Endothelial cell of umbilical vein (primary cell): ENCODE measurements at regions of chr19 and their contacts with region 1.

Region 1: GRCh38 chr19:43784981-43785808 is 4.4 kb upstream of the KCNN4 start:
- DNase-seq: peak; percentile 73
- H3K4me3 ChIP-seq: no peak overlapping the region
- H3K27ac ChIP-seq: no peak overlapping the region
- H3K4me1 ChIP-seq: peaks cover 10% of the 10 kb centered on the region
- H3K27me3 ChIP-seq: no peaks in the 10 kb centered on the region
- CTCF ChIP-seq: peak; percentile 97 to 98
- POLR2A ChIP-seq: no peak

Region 2: GRCh38 chr19:43747557-43748204 is 37.5 kb before region 1 on chr19:
- CTCF ChIA-PET with region 1: interaction called, 113 read pairs
- POLR2A ChIA-PET with region 1: no interaction called
- dilution Hi-C with region 1: no loop called
- intact Hi-C with region 1: loop called (anchors 1 kb)
- DNase-seq: no peak
- H3K4me3 ChIP-seq: no peak overlapping the region
- H3K27ac ChIP-seq: no peak overlapping the region
- H3K4me1 ChIP-seq: peaks cover 5% of the 10 kb centered on the region
- H3K27me3 ChIP-seq: no peaks in the 10 kb centered on the region
- CTCF ChIP-seq: no peak
- POLR2A ChIP-seq: no peak

Region 3: GRCh38 chr19:43754503-43755255 is 30.5 kb before region 1 on chr19 and contains the start of gene SMG9:
- CTCF ChIA-PET with region 1: interaction called, 25 read pairs
- POLR2A ChIA-PET with region 1: no interaction called
- dilution Hi-C with region 1: no loop called
- intact Hi-C with region 1: no loop called
- DNase-seq: peak; percentile 99
- H3K4me3 ChIP-seq: peak within 1 kb of the TSS; percentile 67 to 92 (median 74)
- H3K27ac ChIP-seq: peak within 1 kb of the TSS; percentile 97
- H3K4me1 ChIP-seq: peaks cover 34% of the 10 kb centered on the region
- H3K27me3 ChIP-seq: no peaks in the 10 kb centered on the region
- CTCF ChIP-seq: no peak
- POLR2A ChIP-seq: peak; percentile 50
- total RNA-seq, gene SMG9: 45.0 and 53.3 TPM in 2 replicates

Region 4: GRCh38 chr19:43765109-43765876 is 19.9 kb before region 1 on chr19:
- CTCF ChIA-PET with region 1: interaction called, 114 read pairs
- POLR2A ChIA-PET with region 1: no interaction called
- dilution Hi-C with region 1: no loop called
- intact Hi-C with region 1: loop called (anchors 1 kb)
- DNase-seq: peak; percentile 68
- H3K4me3 ChIP-seq: no peak overlapping the region
- H3K27ac ChIP-seq: peak overlapping the region; percentile 61
- H3K4me1 ChIP-seq: peaks cover 17% of the 10 kb centered on the region
- H3K27me3 ChIP-seq: no peaks in the 10 kb centered on the region
- CTCF ChIP-seq: no peak
- POLR2A ChIP-seq: no peak

Region 5: DNA sequence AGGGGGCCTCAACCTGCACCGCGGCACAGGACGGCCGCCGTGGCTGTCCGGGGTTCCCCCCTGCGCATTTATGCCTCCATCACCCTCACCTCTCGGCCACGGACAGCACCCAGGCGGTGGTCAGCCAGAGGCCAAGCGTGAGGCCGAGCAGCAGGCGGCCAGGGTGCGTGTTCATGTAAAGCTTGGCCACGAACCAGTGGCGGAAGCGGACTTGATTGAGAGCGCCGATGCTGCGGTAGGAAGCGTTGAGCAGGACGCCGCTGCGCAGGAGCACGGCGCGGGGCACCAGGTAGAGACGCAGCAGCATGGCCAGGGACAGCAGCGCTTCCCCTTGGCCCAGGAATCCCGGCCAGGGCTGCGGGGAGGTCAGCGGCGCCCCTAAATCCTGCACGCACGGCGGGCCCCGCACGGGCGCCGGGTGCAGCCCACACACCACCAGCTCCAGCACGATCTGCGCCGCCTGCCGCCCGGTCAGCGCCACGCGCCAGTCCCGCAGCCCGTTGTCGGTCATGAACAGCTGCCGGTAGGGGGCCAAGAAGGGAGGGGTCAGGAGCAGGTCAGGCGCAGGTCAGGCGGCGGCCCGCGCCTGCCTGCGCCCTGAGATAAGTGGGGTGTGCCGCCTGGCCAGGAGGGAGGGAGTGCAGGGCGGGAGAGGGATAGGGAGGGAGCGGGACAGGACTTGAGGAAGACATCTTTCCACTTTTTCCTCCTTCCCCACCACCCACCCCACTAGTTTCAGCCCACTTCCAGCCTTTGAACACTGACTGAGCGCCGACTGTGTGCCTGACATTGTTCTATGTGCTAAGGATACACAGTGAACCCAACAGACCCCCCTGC is 10.9 kb before region 1 on chr19:
- CTCF ChIA-PET with region 1: interaction called, 37 read pairs
- POLR2A ChIA-PET with region 1: no interaction called
- dilution Hi-C with region 1: no loop called
- intact Hi-C with region 1: no loop called
- DNase-seq: peak; percentile 70
- H3K4me3 ChIP-seq: no peak overlapping the region
- H3K27ac ChIP-seq: no peak overlapping the region
- H3K4me1 ChIP-seq: peaks cover 22% of the 10 kb centered on the region
- H3K27me3 ChIP-seq: peaks cover 0 to 3% of the 10 kb centered on the region in 2 experiments
- CTCF ChIP-seq: peak; percentile 27 to 93
- POLR2A ChIP-seq: no peak